ENCODE measurements at regions of chr14 and their contacts with region 1.

Region 1: GRCh38 chr14:23727566-23728335 is 91.6 kb downstream of the DHRS2 start:
- DNase-seq: peak; percentile 23
- H3K4me3 Mint-ChIP-seq: no peak overlapping the region
- H3K27ac Mint-ChIP-seq: no peak overlapping the region
- H3K4me1 Mint-ChIP-seq: peaks cover 7% of the 10 kb centered on the region
- H3K27me3 Mint-ChIP-seq: peaks cover 40% of the 10 kb centered on the region
- CTCF ChIP-seq: peak; percentile 25

Region 2: DNA sequence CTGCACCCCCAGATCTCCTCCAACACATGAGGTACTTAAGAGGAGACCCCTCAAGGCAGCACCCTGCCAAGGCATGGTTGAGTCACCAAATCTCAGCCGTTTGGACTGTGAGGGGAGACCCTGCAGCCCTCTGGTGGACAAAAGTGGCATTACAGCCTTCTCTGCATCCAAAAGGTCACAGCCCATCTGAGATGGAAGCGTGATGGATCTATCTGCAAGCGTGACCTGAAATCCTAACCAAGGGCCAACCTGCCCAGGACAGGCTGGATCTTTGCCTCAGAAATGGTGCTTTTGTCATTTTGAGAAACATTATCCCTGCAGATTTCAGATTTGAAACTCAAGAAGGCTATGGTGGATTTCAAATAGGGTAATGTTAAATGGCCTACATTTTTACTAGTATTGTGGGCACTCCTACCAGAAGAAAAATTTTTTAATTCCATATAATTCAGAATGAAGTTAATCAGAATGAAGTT is 202.1 kb after region 1 on chr14:
- CTCF ChIA-PET with region 1: no interaction called
- intact Hi-C with region 1: loop called (anchors 1 kb)
- DNase-seq: peak; percentile 85
- H3K4me3 Mint-ChIP-seq: no peak overlapping the region
- H3K27ac Mint-ChIP-seq: no peak overlapping the region
- H3K4me1 Mint-ChIP-seq: no peaks in the 10 kb centered on the region
- H3K27me3 Mint-ChIP-seq: peaks cover 37% of the 10 kb centered on the region
- CTCF ChIP-seq: peak; percentile 89

Region 3: DNA sequence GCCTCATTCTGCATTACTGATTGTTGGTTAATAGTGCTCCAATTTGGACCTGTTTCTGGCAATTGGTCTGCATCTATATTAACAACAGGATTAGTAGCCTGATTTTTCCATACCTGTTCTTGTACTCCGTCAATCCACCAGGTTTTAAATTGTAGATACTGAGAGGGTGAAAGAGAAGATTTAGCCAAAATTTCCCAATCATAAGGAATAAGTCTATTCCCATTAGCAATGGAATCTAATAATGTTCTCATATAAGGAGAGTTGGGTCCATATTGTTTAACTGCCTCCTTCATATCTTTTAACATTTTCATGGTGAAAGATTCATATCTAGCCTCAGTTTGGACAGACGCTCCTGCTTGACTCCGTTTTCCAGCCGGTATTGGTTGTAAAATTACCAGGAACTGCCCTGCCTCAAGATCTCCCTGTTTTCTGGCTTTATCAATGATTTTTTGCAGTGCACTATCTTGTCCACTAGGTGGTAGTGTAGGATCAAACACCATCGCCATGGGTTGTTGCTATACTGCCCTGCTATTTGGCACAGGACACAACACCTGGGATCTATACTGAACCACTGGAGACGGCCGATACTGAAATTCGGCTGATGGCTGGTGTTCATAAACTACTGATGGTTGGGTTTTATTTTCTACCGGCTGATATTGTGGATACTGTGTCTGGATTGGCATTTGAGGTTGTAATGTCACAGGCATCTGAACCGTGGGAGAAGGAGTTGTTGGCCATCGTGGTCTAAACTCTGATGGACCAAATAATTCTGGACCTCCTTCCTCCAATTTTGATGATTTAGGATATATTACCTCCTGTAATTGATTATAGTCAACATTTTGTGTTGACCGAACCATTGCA is 286.1 kb after region 1 on chr14:
- CTCF ChIA-PET with region 1: no interaction called
- intact Hi-C with region 1: no loop called
- DNase-seq: peak; percentile 64
- H3K4me3 Mint-ChIP-seq: no peak overlapping the region
- H3K27ac Mint-ChIP-seq: no peak overlapping the region
- H3K4me1 Mint-ChIP-seq: no peaks in the 10 kb centered on the region
- H3K27me3 Mint-ChIP-seq: peaks cover 43% of the 10 kb centered on the region
- CTCF ChIP-seq: peak; percentile 64